CD4-positive, alpha-beta memory T cell (primary cell): ENCODE measurements at regions of chr10 and their contacts with region 1.

Region 1: GRCh38 chr10:69087590-69088470 is at the start of gene SRGN:
- DNase-seq: peak; percentile 87 to 94 (median 90)
- H3K4me3 ChIP-seq: peak within 1 kb of the TSS; percentile 76 to 89
- H3K4me3 Mint-ChIP-seq: peak within 1 kb of the TSS; percentile 86 to 96 (median 92)
- H3K27ac ChIP-seq: peak within 1 kb of the TSS; percentile 100
- H3K27ac Mint-ChIP-seq: peak within 1 kb of the TSS; percentile 94 to 99 (median 98)
- H3K4me1 ChIP-seq: peaks cover 49% of the 10 kb centered on the region
- H3K4me1 Mint-ChIP-seq: peaks cover 38 to 67% (median 50%) of the 10 kb centered on the region in 4 donors
- H3K27me3 ChIP-seq: no peaks in the 10 kb centered on the region
- H3K27me3 Mint-ChIP-seq: peaks cover 0 to 1% of the 10 kb centered on the region in 2 donors
- total RNA-seq, gene SRGN: 122 to 133 TPM

Region 2: DNA sequence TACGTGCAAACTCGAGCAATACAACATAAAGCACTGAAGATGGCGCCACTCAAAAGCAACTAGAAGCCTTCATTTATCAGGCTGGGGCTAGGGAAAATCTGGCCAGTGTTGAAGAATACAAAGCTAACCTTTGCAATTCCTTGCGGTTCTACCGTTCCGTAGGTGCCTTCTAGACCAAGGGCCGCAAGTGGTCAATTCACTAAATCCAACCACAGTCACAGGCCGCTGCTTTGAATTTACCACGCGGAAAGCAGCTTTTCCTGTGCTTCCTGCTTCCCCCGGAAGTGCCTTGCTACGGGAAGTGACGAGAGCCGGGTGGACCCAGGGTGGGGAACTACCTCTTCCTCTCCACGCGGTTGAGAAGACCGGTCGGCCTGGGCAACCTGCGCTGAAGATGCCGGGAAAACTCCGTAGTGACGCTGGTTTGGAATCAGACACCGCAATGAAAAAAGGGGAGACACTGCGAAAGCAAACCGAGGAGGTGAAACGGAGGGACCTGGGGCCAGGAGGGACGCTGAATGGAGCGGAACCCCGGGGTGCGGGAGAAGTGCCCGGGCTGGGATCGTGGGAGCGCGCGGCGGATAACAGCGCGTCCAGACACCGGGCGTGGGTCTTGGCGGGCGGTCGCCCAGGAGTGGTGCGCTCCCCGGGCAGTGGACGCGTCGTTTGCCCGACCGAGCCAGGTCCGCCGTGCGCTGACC is 131.8 kb before region 1 on chr10 and contains the start of gene DDX21:
- CTCF ChIA-PET with region 1: interaction called, 53 read pairs
- POLR2A ChIA-PET with region 1: interaction called, 21 read pairs
- intact Hi-C with region 1: loop called (anchors 1 kb)
- DNase-seq: peak; percentile 87 to 96 (median 90)
- H3K4me3 ChIP-seq: peak within 1 kb of the TSS; percentile 64 to 97
- H3K4me3 Mint-ChIP-seq: peak within 1 kb of the TSS; percentile 97 to 100 (median 100)
- H3K27ac ChIP-seq: peak within 1 kb of the TSS; percentile 100
- H3K27ac Mint-ChIP-seq: peak within 1 kb of the TSS; percentile 98 to 100 (median 100)
- H3K4me1 ChIP-seq: peaks cover 46% of the 10 kb centered on the region
- H3K4me1 Mint-ChIP-seq: peaks cover 16 to 47% (median 35%) of the 10 kb centered on the region in 4 donors
- H3K27me3 ChIP-seq: no peaks in the 10 kb centered on the region
- H3K27me3 Mint-ChIP-seq: no peaks in the 10 kb centered on the region
- total RNA-seq, gene DDX21: 50.6 to 57.1 TPM

Region 3: GRCh38 chr10:69004821-69005220 is 83.0 kb before region 1 on chr10:
- CTCF ChIA-PET with region 1: interaction called, 228 read pairs
- POLR2A ChIA-PET with region 1: interaction called, 56 read pairs
- intact Hi-C with region 1: loop called (anchors 1 kb)
- DNase-seq: peak in 4 of 5 donors; percentile 62 to 70 (median 64)
- H3K4me3 ChIP-seq: no peak overlapping the region
- H3K4me3 Mint-ChIP-seq: no peak overlapping the region
- H3K27ac ChIP-seq: no peak overlapping the region
- H3K27ac Mint-ChIP-seq: peak overlapping the region in 1 of 7 donors; percentile 38
- H3K4me1 ChIP-seq: no peaks in the 10 kb centered on the region
- H3K4me1 Mint-ChIP-seq: peaks cover 1 to 5% (median 3%) of the 10 kb centered on the region in 4 donors
- H3K27me3 ChIP-seq: no peaks in the 10 kb centered on the region
- H3K27me3 Mint-ChIP-seq: no peaks in the 10 kb centered on the region

Region 4: DNA sequence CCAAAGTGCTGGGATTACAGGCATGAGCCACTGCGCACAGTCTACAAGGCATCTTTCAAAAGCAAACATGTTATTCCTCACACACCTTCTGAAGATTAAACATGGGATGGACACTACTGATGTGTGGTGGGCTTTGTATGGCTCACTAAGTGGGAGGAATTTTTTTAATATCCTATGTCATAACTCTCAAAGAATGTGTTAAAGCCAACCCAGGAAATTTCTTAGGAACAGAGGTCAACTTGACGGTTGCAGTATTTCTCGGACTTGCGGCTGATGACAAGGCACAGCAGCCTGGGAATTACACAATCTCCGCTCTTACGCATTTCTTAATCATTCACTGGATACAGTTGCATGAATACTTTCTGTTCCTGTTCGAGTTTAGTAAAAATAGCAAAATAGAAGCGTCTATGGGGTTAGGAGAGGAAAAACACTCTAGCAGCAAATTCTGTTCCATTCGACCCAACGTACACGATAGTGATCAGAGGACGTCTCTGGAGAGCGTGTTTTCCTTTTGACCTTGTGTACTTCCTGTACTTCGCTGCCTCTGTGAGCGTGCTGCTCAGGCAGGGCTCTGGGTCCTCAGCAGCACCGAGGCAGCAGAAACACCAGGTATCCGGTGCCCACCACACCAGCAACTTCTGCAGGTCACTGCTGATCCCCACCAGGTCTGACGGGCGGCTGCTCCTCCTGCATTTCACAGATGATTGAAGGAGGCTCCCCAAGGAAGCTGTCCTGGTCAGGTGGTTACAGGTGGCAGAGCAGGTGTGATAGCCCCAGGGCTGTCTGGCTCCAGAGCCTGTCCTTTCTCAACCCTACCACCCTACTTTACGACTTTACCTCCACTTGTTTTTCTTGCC is 26.3 kb before region 1 on chr10:
- CTCF ChIA-PET with region 1: interaction called, 11 read pairs
- POLR2A ChIA-PET with region 1: interaction called, 24 read pairs
- intact Hi-C with region 1: loop called (anchors 2 kb)
- DNase-seq: peak in 4 of 5 donors; percentile 39 to 48 (median 44)
- H3K4me3 ChIP-seq: peak overlapping the region; percentile 12 to 21
- H3K4me3 Mint-ChIP-seq: peak overlapping the region; percentile 79 to 93 (median 85)
- H3K27ac ChIP-seq: peak overlapping the region; percentile 18
- H3K27ac Mint-ChIP-seq: peak overlapping the region; percentile 85 to 94 (median 87)
- H3K4me1 ChIP-seq: peaks cover 36% of the 10 kb centered on the region
- H3K4me1 Mint-ChIP-seq: peaks cover 27 to 47% (median 34%) of the 10 kb centered on the region in 4 donors
- H3K27me3 ChIP-seq: no peaks in the 10 kb centered on the region
- H3K27me3 Mint-ChIP-seq: no peaks in the 10 kb centered on the region